ENCODE measurements at regions of chr20 and their contacts with region 1.

Region 1: GRCh38 chr20:2101865-2102584 is 398 bp downstream of the STK35 start:
- DNase-seq: peak; percentile 94 to 97
- H3K4me3 ChIP-seq: peak overlapping the region; percentile 90
- H3K4me3 Mint-ChIP-seq: peak overlapping the region; percentile 92
- H3K27ac Mint-ChIP-seq: peak overlapping the region; percentile 99
- H3K4me1 ChIP-seq: peaks cover 7% of the 10 kb centered on the region
- H3K4me1 Mint-ChIP-seq: peaks cover 15% of the 10 kb centered on the region
- H3K27me3 ChIP-seq: no peaks in the 10 kb centered on the region
- H3K27me3 Mint-ChIP-seq: peaks cover 2% of the 10 kb centered on the region
- CTCF ChIP-seq: no peak

Region 2: GRCh38 chr20:2114990-2115681 is 13.1 kb after region 1 on chr20:
- CTCF ChIA-PET with region 1: no interaction called
- POLR2A ChIA-PET with region 1: no interaction called
- intact Hi-C with region 1: no loop called
- DNase-seq: no peak
- H3K4me3 ChIP-seq: no peak overlapping the region
- H3K4me3 Mint-ChIP-seq: no peak overlapping the region
- H3K27ac Mint-ChIP-seq: no peak overlapping the region
- H3K4me1 ChIP-seq: no peaks in the 10 kb centered on the region
- H3K4me1 Mint-ChIP-seq: no peaks in the 10 kb centered on the region
- H3K27me3 ChIP-seq: no peaks in the 10 kb centered on the region
- H3K27me3 Mint-ChIP-seq: no peaks in the 10 kb centered on the region
- CTCF ChIP-seq: no peak

Region 3: DNA sequence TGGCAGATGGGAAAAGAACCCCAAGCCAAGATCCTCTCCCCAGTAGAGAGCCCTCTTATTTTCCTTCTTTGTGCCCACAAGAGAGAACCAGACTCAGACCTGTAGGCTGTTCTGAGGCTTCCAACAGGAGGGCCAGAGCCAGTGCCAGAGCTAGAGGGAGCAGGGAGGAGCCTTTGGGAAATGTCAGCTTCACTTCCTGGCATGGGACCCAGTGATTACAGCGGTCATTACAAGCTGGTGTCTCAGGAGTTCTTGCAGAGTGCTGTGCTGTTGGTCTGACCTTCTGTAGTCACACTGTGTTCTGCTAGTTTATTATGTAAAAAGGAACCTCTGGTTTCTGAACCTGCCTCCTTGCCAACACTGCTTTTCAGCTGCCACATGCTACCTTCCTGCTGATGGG is 38.5 kb after region 1 on chr20:
- CTCF ChIA-PET with region 1: no interaction called
- POLR2A ChIA-PET with region 1: interaction called, 12 read pairs
- intact Hi-C with region 1: no loop called
- DNase-seq: no peak
- H3K4me3 ChIP-seq: no peak overlapping the region
- H3K4me3 Mint-ChIP-seq: no peak overlapping the region
- H3K27ac Mint-ChIP-seq: no peak overlapping the region
- H3K4me1 ChIP-seq: no peaks in the 10 kb centered on the region
- H3K4me1 Mint-ChIP-seq: no peaks in the 10 kb centered on the region
- H3K27me3 ChIP-seq: no peaks in the 10 kb centered on the region
- H3K27me3 Mint-ChIP-seq: no peaks in the 10 kb centered on the region
- CTCF ChIP-seq: no peak

Region 4: GRCh38 chr20:2183381-2183780 is 81.4 kb after region 1 on chr20:
- CTCF ChIA-PET with region 1: no interaction called
- POLR2A ChIA-PET with region 1: no interaction called
- intact Hi-C with region 1: no loop called
- DNase-seq: no peak
- H3K4me3 ChIP-seq: no peak overlapping the region
- H3K4me3 Mint-ChIP-seq: no peak overlapping the region
- H3K27ac Mint-ChIP-seq: no peak overlapping the region
- H3K4me1 ChIP-seq: no peaks in the 10 kb centered on the region
- H3K4me1 Mint-ChIP-seq: no peaks in the 10 kb centered on the region
- H3K27me3 ChIP-seq: no peaks in the 10 kb centered on the region
- H3K27me3 Mint-ChIP-seq: peaks cover 7% of the 10 kb centered on the region
- CTCF ChIP-seq: no peak

Measured in Caco-2 (cell line).